Psoas muscle (tissue), 8 donors: ENCODE measurements at regions of chr14 and their contacts with region 1.

Region 1: GRCh38 chr14:22570132-22570949 is 18.7 kb downstream of the DAD1 start:
- DNase-seq: no peak
- ATAC-seq: peak; percentile 61 to 82 (median 71)
- H3K4me3 ChIP-seq: no peak overlapping the region
- H3K27ac ChIP-seq: peak overlapping the region; percentile 5
- H3K4me1 ChIP-seq: peaks cover 34% of the 10 kb centered on the region
- H3K27me3 ChIP-seq: no peaks in the 10 kb centered on the region
- CTCF ChIP-seq: peak; percentile 87

Region 2: GRCh38 chr14:22713631-22713950 is 143.2 kb after region 1 on chr14:
- intact Hi-C with region 1: loop called in 1 of 2 experiments (anchors 5 kb)
- DNase-seq: no peak
- ATAC-seq: no peak
- H3K4me3 ChIP-seq: peak overlapping the region; percentile 49
- H3K27ac ChIP-seq: no peak overlapping the region
- H3K4me1 ChIP-seq: no peaks in the 10 kb centered on the region
- H3K27me3 ChIP-seq: peaks cover 0 to 46% (median 8%) of the 10 kb centered on the region in 3 donors
- CTCF ChIP-seq: no peak